ENCODE measurements at regions of chr5 and their contacts with region 1.

Region 1: DNA sequence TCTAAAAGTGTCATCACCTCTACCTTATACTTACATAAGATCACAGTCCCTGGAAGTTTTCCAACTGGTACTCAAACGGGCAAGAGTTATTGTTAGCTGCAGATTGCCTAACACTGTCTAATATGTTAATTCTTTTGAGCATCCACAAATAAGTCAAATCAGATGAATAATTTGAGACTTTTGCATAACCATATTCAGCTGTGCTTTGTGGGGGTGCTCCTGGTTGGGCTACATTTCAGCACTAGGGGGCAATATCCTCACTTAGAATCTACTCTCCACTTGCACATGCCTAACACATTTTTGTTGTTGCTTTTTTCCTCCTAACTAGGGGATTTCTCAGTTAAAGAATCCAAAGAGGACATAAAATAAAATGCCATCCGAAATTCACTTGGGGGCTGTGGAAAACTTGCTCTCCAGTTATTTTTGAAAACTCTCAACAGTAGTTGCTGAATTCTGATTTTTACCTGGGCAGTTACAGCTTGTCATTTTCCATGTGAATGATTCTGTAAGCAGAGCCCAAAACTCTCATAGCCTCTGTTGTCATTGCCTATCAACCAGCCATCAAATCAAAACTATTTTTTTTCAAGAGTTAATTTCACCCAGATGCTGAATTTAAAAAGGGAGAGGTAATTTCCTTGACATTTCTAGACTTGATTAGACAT is 71.5 kb downstream of the TRIM36 start:
- DNase-seq: peak in 4 of 9 experiments; percentile 21 to 66 (median 38)
- ATAC-seq: peak; percentile 55
- H3K4me3 ChIP-seq: no peak overlapping the region
- H3K4me3 Mint-ChIP-seq: no peak overlapping the region
- H3K27ac ChIP-seq: no peak overlapping the region
- H3K27ac Mint-ChIP-seq: no peak overlapping the region
- H3K4me1 ChIP-seq: no peaks in the 10 kb centered on the region
- H3K4me1 Mint-ChIP-seq: no peaks in the 10 kb centered on the region
- H3K27me3 ChIP-seq: no peaks in the 10 kb centered on the region
- H3K27me3 Mint-ChIP-seq: peaks cover 17% of the 10 kb centered on the region
- CTCF ChIP-seq: peak; percentile 55

Region 2: DNA sequence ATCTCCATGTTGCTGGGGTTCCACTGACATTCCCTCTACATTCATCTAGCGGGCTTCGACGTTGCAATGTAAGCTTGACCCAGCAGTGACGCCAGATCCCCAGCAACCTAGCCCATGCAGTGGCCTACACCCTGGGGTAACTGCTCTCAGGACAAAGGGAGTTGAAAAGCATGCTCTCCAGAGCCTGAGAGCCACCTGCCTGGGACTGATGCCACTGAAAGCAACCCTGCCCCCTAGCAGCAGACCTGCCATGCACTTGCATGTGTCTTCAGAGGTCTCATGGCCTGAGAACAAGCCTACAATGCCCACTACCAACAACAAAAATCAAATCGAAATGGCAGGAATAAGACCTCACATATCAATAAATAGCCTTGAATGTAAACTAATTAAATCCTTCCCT is 258.8 kb before region 1 on chr5:
- CTCF ChIA-PET with region 1: no interaction called
- POLR2A ChIA-PET with region 1: no interaction called
- intact Hi-C with region 1: no loop called
- DNase-seq: no peak
- ATAC-seq: no peak
- H3K4me3 ChIP-seq: no peak overlapping the region
- H3K4me3 Mint-ChIP-seq: no peak overlapping the region
- H3K27ac ChIP-seq: no peak overlapping the region
- H3K27ac Mint-ChIP-seq: no peak overlapping the region
- H3K4me1 ChIP-seq: no peaks in the 10 kb centered on the region
- H3K4me1 Mint-ChIP-seq: no peaks in the 10 kb centered on the region
- H3K27me3 ChIP-seq: no peaks in the 10 kb centered on the region
- H3K27me3 Mint-ChIP-seq: no peaks in the 10 kb centered on the region
- CTCF ChIP-seq: no peak

Region 3: DNA sequence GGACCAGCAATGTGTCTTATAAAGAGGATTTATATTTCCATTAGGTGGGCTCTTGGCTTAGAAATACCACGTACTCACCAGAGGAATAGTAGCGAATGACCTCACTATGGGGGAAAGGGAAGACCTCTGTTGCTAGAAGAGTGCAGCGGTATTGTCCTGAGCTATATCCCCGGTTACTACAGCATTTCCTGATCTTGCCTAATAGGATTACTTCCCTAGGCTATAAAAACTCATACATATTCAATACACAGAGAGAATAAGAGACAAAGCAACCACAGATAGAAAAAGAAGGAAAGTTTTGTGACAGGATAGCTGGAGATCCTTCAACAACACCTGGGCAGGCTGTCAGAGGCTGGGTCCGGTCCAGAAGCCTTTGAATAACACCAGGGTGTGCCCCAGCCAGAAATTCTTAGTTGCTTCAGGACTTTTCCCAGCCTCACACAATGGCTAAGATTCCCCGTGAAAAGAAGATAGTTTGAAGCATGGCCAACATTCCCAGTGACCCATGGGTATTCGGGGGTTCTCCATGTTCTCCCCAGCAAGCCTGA is 13.9 kb before region 1 on chr5:
- CTCF ChIA-PET with region 1: interaction called, 11 read pairs
- POLR2A ChIA-PET with region 1: no interaction called
- intact Hi-C with region 1: no loop called
- DNase-seq: no peak
- ATAC-seq: no peak
- H3K4me3 ChIP-seq: no peak overlapping the region
- H3K4me3 Mint-ChIP-seq: no peak overlapping the region
- H3K27ac ChIP-seq: no peak overlapping the region
- H3K27ac Mint-ChIP-seq: no peak overlapping the region
- H3K4me1 ChIP-seq: no peaks in the 10 kb centered on the region
- H3K4me1 Mint-ChIP-seq: no peaks in the 10 kb centered on the region
- H3K27me3 ChIP-seq: no peaks in the 10 kb centered on the region
- H3K27me3 Mint-ChIP-seq: peaks cover 25% of the 10 kb centered on the region
- CTCF ChIP-seq: no peak

Region 4: GRCh38 chr5:115136294-115136693 is 38.1 kb after region 1 on chr5:
- CTCF ChIA-PET with region 1: no interaction called
- POLR2A ChIA-PET with region 1: no interaction called
- intact Hi-C with region 1: no loop called
- DNase-seq: no peak
- ATAC-seq: no peak
- H3K4me3 ChIP-seq: no peak overlapping the region
- H3K4me3 Mint-ChIP-seq: no peak overlapping the region
- H3K27ac ChIP-seq: no peak overlapping the region
- H3K27ac Mint-ChIP-seq: no peak overlapping the region
- H3K4me1 ChIP-seq: no peaks in the 10 kb centered on the region
- H3K4me1 Mint-ChIP-seq: no peaks in the 10 kb centered on the region
- H3K27me3 ChIP-seq: peaks cover 0 to 3% of the 10 kb centered on the region in 2 experiments
- H3K27me3 Mint-ChIP-seq: peaks cover 31% of the 10 kb centered on the region
- CTCF ChIP-seq: no peak

Region 5: GRCh38 chr5:115246361-115246991 is 148.3 kb after region 1 on chr5:
- CTCF ChIA-PET with region 1: interaction called, 10 read pairs
- POLR2A ChIA-PET with region 1: no interaction called
- intact Hi-C with region 1: loop called (anchors 1 kb)
- DNase-seq: peak in 2 of 9 experiments; percentile 44 to 60
- ATAC-seq: peak; percentile 63
- H3K4me3 ChIP-seq: no peak overlapping the region
- H3K4me3 Mint-ChIP-seq: no peak overlapping the region
- H3K27ac ChIP-seq: no peak overlapping the region
- H3K27ac Mint-ChIP-seq: no peak overlapping the region
- H3K4me1 ChIP-seq: no peaks in the 10 kb centered on the region
- H3K4me1 Mint-ChIP-seq: peaks cover 18% of the 10 kb centered on the region
- H3K27me3 ChIP-seq: no peaks in the 10 kb centered on the region
- H3K27me3 Mint-ChIP-seq: no peaks in the 10 kb centered on the region
- CTCF ChIP-seq: peak; percentile 87

Region 6: GRCh38 chr5:115262321-115263077 is 164.3 kb after region 1 on chr5 and contains the start of gene PGGT1B:
- CTCF ChIA-PET with region 1: interaction called, 6 read pairs
- POLR2A ChIA-PET with region 1: no interaction called
- intact Hi-C with region 1: loop called in 1 of 2 experiments (anchors 5 kb)
- DNase-seq: peak; percentile 37 to 83 (median 72)
- ATAC-seq: peak; percentile 94
- H3K4me3 ChIP-seq: peak within 1 kb of the TSS; percentile 82 to 97
- H3K4me3 Mint-ChIP-seq: peak within 1 kb of the TSS; percentile 94
- H3K27ac ChIP-seq: peak within 1 kb of the TSS; percentile 62 to 91
- H3K27ac Mint-ChIP-seq: peak within 1 kb of the TSS; percentile 98
- H3K4me1 ChIP-seq: peaks cover 28% of the 10 kb centered on the region
- H3K4me1 Mint-ChIP-seq: peaks cover 49% of the 10 kb centered on the region
- H3K27me3 ChIP-seq: no peaks in the 10 kb centered on the region
- H3K27me3 Mint-ChIP-seq: no peaks in the 10 kb centered on the region
- CTCF ChIP-seq: no peak
- total RNA-seq, gene PGGT1B: 55.2 to 57.0 TPM

Region 7: GRCh38 chr5:115571441-115571878 is 473.3 kb after region 1 on chr5:
- CTCF ChIA-PET with region 1: interaction called, 9 read pairs
- POLR2A ChIA-PET with region 1: no interaction called
- intact Hi-C with region 1: loop called (anchors 5 kb)
- DNase-seq: no peak
- ATAC-seq: no peak
- H3K4me3 ChIP-seq: no peak overlapping the region
- H3K4me3 Mint-ChIP-seq: no peak overlapping the region
- H3K27ac ChIP-seq: no peak overlapping the region
- H3K27ac Mint-ChIP-seq: no peak overlapping the region
- H3K4me1 ChIP-seq: no peaks in the 10 kb centered on the region
- H3K4me1 Mint-ChIP-seq: peaks cover 3% of the 10 kb centered on the region
- H3K27me3 ChIP-seq: no peaks in the 10 kb centered on the region
- H3K27me3 Mint-ChIP-seq: peaks cover 4% of the 10 kb centered on the region
- CTCF ChIP-seq: no peak

Region 8: DNA sequence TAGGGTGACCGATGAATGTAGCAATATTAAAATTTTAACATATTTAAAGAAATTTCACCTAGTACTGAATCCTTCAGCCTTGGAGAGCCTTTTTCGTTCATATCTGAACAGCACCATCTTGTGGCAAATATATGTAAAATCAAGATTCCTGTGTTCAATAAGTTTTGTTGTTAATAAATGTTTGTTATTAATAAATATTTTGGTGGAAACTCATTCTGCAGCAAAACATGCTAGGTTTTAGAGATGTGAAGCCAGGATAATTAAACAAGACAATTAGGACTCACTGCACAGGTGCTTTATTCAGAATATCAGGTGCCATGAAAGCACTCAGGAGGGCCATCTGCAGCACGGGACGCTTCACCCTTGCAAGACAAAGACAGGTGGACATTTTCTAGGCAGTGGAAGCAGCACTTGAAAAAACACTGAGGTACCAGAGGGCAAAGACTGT is 488.5 kb after region 1 on chr5:
- CTCF ChIA-PET with region 1: no interaction called
- POLR2A ChIA-PET with region 1: no interaction called
- intact Hi-C with region 1: loop called in 1 of 2 experiments (anchors 5 kb)
- DNase-seq: peak in 2 of 9 experiments; percentile 29 to 51
- ATAC-seq: peak; percentile 36
- H3K4me3 ChIP-seq: no peak overlapping the region
- H3K4me3 Mint-ChIP-seq: no peak overlapping the region
- H3K27ac ChIP-seq: no peak overlapping the region
- H3K27ac Mint-ChIP-seq: no peak overlapping the region
- H3K4me1 ChIP-seq: no peaks in the 10 kb centered on the region
- H3K4me1 Mint-ChIP-seq: no peaks in the 10 kb centered on the region
- H3K27me3 ChIP-seq: no peaks in the 10 kb centered on the region
- H3K27me3 Mint-ChIP-seq: no peaks in the 10 kb centered on the region
- CTCF ChIP-seq: peak; percentile 63

Region 9: DNA sequence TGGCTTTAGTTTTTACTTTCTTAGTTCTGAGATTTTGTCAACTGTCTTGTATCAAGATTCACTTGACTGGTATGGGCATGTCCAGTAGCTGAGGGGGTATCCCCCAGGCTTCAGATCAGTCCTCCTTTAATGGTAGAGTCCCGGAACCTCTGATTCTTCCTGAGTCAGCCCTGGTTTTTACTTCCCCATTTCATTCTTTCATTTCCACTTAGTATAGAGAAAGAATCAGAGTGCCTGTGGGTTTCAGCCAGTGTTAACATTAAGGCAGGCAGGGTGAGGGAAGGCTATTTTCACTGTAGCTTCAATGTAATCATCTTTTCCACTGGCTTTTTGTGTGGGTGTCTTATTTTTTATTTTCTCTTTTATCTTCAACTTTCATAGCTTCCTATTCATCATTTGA is 978.3 kb after region 1 on chr5:
- CTCF ChIA-PET with region 1: no interaction called
- POLR2A ChIA-PET with region 1: no interaction called
- intact Hi-C with region 1: loop called in 1 of 2 experiments (anchors 10 kb)
- DNase-seq: peak in 1 of 9 experiments; percentile 14
- ATAC-seq: no peak
- H3K4me3 ChIP-seq: no peak overlapping the region
- H3K4me3 Mint-ChIP-seq: no peak overlapping the region
- H3K27ac ChIP-seq: no peak overlapping the region
- H3K27ac Mint-ChIP-seq: no peak overlapping the region
- H3K4me1 ChIP-seq: no peaks in the 10 kb centered on the region
- H3K4me1 Mint-ChIP-seq: peaks cover 7% of the 10 kb centered on the region
- H3K27me3 ChIP-seq: no peaks in the 10 kb centered on the region
- H3K27me3 Mint-ChIP-seq: peaks cover 25% of the 10 kb centered on the region
- CTCF ChIP-seq: no peak